ENCODE measurements at regions of chr19 and their contacts with region 1.

Region 1: DNA sequence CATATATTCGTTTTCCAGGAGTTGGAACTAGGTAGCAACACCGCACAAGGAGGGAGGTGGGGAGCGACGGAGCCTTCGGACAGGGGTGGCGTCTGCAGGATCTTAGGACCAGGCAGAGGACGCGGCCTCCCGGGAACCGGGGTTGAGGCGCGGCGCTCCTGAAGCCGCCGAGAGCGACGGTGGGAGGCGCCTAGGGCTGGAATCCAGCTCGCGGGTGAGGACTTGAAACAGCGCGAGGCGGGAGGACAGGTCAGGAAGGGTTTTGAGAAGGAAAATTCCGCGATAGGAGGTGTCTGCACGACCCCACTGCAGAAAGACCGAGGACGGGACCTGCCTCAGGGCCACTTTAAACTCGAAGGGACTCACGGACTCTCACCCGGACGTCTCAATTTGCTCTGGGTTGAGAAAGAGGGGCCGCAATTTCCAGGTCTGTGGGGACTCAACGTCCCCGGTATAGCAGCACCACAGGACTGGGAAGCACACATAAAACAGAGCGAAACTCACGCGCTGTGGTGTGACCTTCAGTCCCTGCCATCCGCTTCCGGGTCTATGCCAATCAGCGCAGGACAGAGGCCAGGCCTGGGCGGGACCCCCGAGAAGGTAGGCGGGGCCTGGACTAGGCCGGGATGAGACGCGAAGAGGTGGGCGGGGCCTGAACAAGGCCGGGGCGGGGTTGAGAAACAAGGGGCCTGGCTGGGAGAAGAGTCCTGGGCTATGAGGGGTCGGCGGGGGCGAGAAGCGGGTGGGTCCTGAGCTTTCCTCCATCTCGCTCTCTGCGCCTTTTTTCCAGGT is at the start of gene ZNF320:
- DNase-seq: peak; percentile 96
- H3K4me3 ChIP-seq: peak within 1 kb of the TSS; percentile 83 to 99 (median 97)
- H3K27ac ChIP-seq: peak within 1 kb of the TSS; percentile 89
- H3K4me1 ChIP-seq: peaks cover 6% of the 10 kb centered on the region
- H3K27me3 ChIP-seq: no peaks in the 10 kb centered on the region
- CTCF ChIP-seq: no peak
- POLR2A ChIP-seq: peak; percentile 69
- total RNA-seq, gene ZNF320: 10.9 and 11.1 TPM in 2 replicates

Region 2: GRCh38 chr19:52962394-52963246 is 65.3 kb after region 1 on chr19 and contains the start of gene ZNF816:
- CTCF ChIA-PET with region 1: interaction called, 3 read pairs
- POLR2A ChIA-PET with region 1: no interaction called
- dilution Hi-C with region 1: no loop called
- intact Hi-C with region 1: loop called (anchors 1 kb)
- DNase-seq: peak; percentile 96
- H3K4me3 ChIP-seq: peak within 1 kb of the TSS; percentile 74 to 83 (median 77)
- H3K27ac ChIP-seq: peak within 1 kb of the TSS; percentile 56
- H3K4me1 ChIP-seq: peaks cover 4% of the 10 kb centered on the region
- H3K27me3 ChIP-seq: no peaks in the 10 kb centered on the region
- CTCF ChIP-seq: no peak
- POLR2A ChIP-seq: peak; percentile 87
- total RNA-seq, gene ZNF816: 4.9 and 5.3 TPM in 2 replicates

Region 3: DNA sequence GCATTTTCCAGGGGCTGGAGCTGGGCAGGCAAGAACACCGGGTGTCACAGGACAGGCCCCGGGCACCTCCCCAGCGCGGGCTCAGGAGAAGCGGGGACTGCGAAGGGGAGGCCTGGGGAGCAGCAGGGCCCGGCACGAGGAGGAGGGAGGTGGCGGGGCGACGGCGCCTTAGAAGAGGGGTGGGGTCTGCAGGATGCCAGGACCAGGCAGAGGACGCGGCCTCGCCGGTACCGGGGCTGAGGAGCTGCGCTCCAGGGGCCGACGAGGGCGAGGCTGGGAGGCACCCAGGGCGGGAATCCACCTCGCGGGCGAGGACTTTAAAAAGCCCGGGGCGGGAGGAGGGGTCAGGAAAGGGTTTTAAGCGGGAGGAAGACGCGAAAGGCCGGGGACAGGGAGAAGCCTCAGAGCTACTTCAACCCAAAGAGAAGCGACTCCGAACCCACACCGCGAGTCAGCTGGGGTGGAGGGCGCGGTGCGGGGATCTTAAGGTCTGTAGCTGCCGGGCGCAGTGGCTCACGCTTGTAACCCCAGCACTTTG is 260.8 kb after region 1 on chr19:
- CTCF ChIA-PET with region 1: no interaction called
- POLR2A ChIA-PET with region 1: no interaction called
- dilution Hi-C with region 1: no loop called
- intact Hi-C with region 1: loop called (anchors 1 kb)
- DNase-seq: peak; percentile 18
- H3K4me3 ChIP-seq: peak overlapping the region; percentile 50 to 68 (median 66)
- H3K27ac ChIP-seq: no peak overlapping the region
- H3K4me1 ChIP-seq: peaks cover 8% of the 10 kb centered on the region
- H3K27me3 ChIP-seq: no peaks in the 10 kb centered on the region
- CTCF ChIP-seq: no peak
- POLR2A ChIP-seq: no peak

Measured in endothelial cell of umbilical vein (primary cell).